Heart right ventricle (tissue), 16 donors: ENCODE measurements at regions of chr4 and their contacts with region 1.

Region 1: GRCh38 chr4:26459054-26459755 is 31.1 kb downstream of the CCKAR start:
- DNase-seq: no peak
- ATAC-seq: peak in 3 of 8 donors; percentile 54 to 62 (median 58)
- H3K4me3 ChIP-seq: no peak overlapping the region
- H3K27ac ChIP-seq: no peak overlapping the region
- H3K4me1 ChIP-seq: peaks cover 0 to 8% (median 0%) of the 10 kb centered on the region in 9 donors
- H3K27me3 ChIP-seq: peaks cover 0 to 13% (median 0%) of the 10 kb centered on the region in 7 donors
- CTCF ChIP-seq: peak; percentile 33 to 71 (median 62)

Region 2: DNA sequence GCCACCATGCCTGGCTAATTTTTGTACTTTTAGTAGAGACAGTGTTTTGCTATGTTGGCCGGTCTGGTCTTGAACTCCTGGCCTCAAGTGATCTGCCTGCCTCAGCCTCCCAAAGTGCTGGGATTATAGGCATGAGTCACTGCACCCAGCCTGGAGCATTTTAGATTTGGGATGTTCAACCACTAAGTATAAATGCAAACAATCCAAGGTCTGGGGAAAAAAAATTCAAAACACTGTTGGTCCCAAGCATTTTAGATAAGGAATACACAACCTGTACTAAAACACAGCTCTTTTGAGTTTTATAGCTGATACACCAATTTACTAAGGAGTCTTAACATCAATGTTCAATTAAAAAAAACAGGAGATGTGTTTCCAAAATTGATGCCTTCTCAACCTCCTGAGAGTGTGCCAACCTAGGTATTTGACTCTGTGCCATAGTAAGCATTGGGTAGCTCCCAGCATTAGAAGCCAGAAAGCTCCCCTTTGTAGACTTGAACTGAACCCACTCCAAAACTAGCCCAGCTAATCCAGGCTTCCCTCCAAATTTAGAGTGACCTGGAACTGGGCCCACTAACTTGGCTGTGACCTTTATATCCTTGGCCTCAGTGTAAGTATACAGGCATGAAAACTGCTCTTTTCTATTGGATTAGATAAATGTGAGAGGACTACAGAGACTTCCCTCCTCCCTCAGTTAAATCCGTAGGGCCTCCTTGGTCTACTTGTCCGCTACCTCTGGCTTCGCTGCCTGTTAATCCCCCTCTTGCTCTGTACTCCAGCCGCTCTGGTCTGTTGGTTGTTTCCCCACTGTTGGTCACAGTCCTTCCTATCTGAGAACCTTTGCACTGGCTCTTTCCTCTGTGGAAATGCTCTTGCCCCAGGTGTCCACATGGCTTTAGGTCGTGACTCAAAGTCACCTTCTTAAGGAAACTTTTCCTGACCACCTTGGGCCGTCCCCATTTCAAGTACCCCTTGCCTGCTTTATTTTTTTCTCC is 46.5 kb before region 1 on chr4:
- intact Hi-C with region 1: no loop called
- DNase-seq: peak; percentile 38 to 71
- ATAC-seq: peak; percentile 75 to 94 (median 89)
- H3K4me3 ChIP-seq: no peak overlapping the region
- H3K27ac ChIP-seq: peak overlapping the region in 8 of 10 donors; percentile 16 to 67 (median 42)
- H3K4me1 ChIP-seq: peaks cover 4 to 29% (median 16%) of the 10 kb centered on the region in 9 donors
- H3K27me3 ChIP-seq: no peaks in the 10 kb centered on the region
- CTCF ChIP-seq: no peak

Region 3: DNA sequence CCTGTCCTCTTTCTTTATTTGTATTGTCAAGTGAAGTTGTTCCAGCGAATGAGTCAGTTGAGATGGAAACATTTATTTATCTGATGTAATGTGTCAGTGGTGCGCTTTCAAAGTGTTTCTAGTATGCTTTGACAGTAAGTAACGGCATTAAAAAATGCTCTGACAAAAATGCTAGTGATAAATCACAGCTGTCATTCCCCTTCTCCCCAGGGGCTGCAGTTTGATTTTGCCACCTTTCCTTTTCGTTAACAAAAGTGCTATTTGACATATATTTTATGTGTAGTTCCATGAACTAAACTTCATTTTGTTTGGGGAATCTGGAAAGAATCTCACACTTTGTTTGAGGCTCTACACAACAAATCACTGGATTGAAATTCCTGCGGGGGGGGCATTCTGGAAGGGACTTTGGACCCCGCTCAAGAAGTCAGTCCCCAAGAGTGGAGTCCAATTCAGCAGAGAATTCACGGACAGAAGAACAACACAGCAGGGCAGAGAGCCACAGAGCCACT is 117.1 kb after region 1 on chr4:
- intact Hi-C with region 1: loop called in 1 of 10 experiments (anchors 10 kb)
- DNase-seq: peak; percentile 12 to 22
- ATAC-seq: peak in 3 of 8 donors; percentile 31 to 73 (median 52)
- H3K4me3 ChIP-seq: no peak overlapping the region
- H3K27ac ChIP-seq: no peak overlapping the region
- H3K4me1 ChIP-seq: peaks cover 0 to 11% (median 0%) of the 10 kb centered on the region in 9 donors
- H3K27me3 ChIP-seq: peaks cover 0 to 9% (median 0%) of the 10 kb centered on the region in 7 donors
- CTCF ChIP-seq: no peak

Region 4: GRCh38 chr4:26719954-26720552 is 260.8 kb after region 1 on chr4:
- intact Hi-C with region 1: loop called in 8 of 10 experiments (anchors 2 to 10 kb)
- DNase-seq: no peak
- ATAC-seq: no peak
- H3K4me3 ChIP-seq: no peak overlapping the region
- H3K27ac ChIP-seq: no peak overlapping the region
- H3K4me1 ChIP-seq: peaks cover 0 to under 1% (median 0%) of the 10 kb centered on the region in 9 donors
- H3K27me3 ChIP-seq: no peaks in the 10 kb centered on the region
- CTCF ChIP-seq: peak; percentile 34 to 71 (median 66)

Region 5: GRCh38 chr4:27016551-27016950 is 557.3 kb after region 1 on chr4:
- intact Hi-C with region 1: loop called in 7 of 10 experiments (anchors 2 to 10 kb)
- DNase-seq: no peak
- ATAC-seq: no peak
- H3K4me3 ChIP-seq: no peak overlapping the region
- H3K27ac ChIP-seq: no peak overlapping the region
- H3K4me1 ChIP-seq: no peaks in the 10 kb centered on the region
- H3K27me3 ChIP-seq: no peaks in the 10 kb centered on the region
- CTCF ChIP-seq: no peak